Panc1 (cell line): ENCODE measurements at regions of chr7 and their contacts with region 1.

Region 1: DNA sequence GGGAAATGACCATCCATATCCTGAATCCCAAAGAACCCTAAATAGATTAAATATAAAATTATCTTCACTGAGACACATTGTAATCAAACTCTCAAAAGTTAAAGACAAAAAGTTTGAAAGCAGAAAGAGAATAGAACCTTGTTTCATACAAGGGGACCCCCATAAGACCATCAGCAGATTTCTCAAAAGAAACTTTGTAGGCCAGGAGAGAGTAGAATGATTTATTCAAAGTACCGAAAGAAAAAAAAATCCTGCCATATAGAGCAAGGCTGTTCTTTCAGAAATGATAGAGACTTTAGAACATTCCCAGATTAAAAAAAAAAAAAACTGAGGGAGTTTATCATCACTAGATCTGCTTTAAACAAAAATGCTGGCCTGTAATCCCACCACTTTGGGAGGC is 34.8 kb upstream of the KLF14 start:
- DNase-seq: no peak
- ATAC-seq: no peak
- H3K4me3 ChIP-seq: no peak overlapping the region
- H3K27ac ChIP-seq: no peak overlapping the region
- H3K4me1 ChIP-seq: no peaks in the 10 kb centered on the region
- H3K27me3 ChIP-seq: no peaks in the 10 kb centered on the region
- CTCF ChIP-seq: no peak

Region 2: DNA sequence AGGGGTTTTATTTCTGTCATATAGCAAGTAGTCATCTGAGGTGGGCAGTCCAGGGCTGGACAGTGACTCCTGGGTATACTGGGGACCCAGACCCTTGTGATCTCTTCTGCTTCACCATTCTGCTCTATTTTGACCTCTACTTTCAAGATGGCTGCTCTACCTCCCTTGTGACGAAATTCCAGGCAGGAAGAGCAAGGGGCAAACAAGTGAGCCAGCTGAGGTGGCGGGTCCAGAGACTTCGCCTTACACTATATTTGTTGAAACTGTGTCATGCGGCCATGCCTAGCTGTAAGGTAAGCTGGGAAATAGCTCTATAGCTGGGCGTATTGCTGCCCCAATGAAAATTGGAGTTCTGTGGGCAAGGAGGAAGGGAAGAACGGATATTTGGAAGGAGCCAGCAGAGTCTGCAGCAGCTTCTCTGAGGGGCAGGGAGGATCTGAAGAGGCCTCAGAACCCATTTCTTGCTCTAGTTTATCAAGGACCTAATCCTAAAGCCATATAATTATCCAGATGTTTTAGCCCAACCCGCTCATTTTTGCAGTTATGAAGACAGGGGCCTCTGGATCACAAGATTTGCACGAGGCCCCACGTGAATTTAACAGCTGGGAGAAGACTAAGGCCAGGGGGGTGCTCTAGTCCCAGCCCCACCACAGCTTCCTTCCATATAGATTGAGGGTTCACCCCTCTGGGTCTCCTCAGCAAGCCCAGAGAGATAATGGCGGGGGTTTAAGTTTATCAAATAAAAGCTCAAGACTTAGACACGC is 396.3 kb before region 1 on chr7:
- CTCF ChIA-PET with region 1: interaction called, 12 read pairs
- POLR2A ChIA-PET with region 1: no interaction called
- in situ Hi-C with region 1: no loop called
- intact Hi-C with region 1: no loop called
- DNase-seq: no peak
- ATAC-seq: no peak
- H3K4me3 ChIP-seq: no peak overlapping the region
- H3K27ac ChIP-seq: peak overlapping the region; percentile 55
- H3K4me1 ChIP-seq: peaks cover 20% of the 10 kb centered on the region
- H3K27me3 ChIP-seq: no peaks in the 10 kb centered on the region
- CTCF ChIP-seq: no peak

Region 3: GRCh38 chr7:130822642-130823041 is 53.8 kb after region 1 on chr7:
- CTCF ChIA-PET with region 1: no interaction called
- POLR2A ChIA-PET with region 1: no interaction called
- in situ Hi-C with region 1: no loop called
- intact Hi-C with region 1: loop called (anchors 2 kb)
- DNase-seq: no peak
- ATAC-seq: no peak
- H3K4me3 ChIP-seq: no peak overlapping the region
- H3K27ac ChIP-seq: no peak overlapping the region
- H3K4me1 ChIP-seq: no peaks in the 10 kb centered on the region
- H3K27me3 ChIP-seq: no peaks in the 10 kb centered on the region
- CTCF ChIP-seq: no peak